Heart right ventricle (tissue), 16 donors: ENCODE measurements at regions of chr2 and their contacts with region 1.

Region 1: DNA sequence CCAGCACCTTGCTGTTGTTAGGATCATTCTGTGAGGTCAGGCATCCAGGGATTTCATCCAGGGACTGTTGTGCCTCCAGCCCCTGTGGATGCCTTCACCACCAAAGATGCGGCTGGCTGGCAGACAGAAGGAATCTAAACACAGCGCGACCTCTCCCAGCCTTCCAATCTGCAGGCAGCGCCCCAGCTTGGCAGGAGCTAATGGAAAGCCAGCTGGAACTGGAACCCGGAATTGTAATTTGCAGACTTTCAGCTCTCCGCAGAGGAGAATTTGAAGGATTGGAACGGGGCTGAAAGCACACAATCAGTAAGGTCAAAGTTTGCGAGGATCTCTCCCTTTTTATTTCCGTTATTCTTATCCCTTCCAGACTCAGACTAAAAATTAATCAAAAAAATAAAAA is 127.8 kb downstream of the TRIB2 start:
- DNase-seq: peak; percentile 61 to 66
- ATAC-seq: peak; percentile 58 to 93 (median 90)
- H3K4me3 ChIP-seq: peak overlapping the region in 2 of 10 donors; percentile 9 to 13
- H3K27ac ChIP-seq: peak overlapping the region in 9 of 10 donors; percentile 24 to 77 (median 42)
- H3K4me1 ChIP-seq: peaks cover 0 to 15% (median 4%) of the 10 kb centered on the region in 9 donors
- H3K27me3 ChIP-seq: no peaks in the 10 kb centered on the region
- CTCF ChIP-seq: no peak

Region 2: DNA sequence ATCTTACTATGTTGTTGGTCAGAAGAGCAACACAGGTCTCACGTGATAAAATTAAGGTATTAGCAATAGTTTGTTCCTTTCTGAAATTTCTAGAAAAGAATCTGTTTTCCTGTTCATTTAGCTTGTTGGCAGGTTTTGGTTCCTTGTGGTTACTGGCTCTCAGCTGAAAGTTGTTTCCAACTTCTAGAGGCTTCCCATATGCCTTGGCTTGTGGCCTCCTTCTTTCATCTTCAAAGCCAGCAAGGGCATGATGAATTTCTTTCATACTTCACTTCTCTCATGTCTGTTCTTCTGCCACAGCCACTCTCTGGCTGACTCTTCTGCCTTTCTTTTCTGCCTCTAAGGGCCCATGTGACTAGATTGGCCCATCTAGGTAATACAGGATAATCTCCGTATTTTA is 65.9 kb after region 1 on chr2:
- intact Hi-C with region 1: loop called in 3 of 10 experiments (anchors 5 to 10 kb)
- DNase-seq: no peak
- ATAC-seq: no peak
- H3K4me3 ChIP-seq: no peak overlapping the region
- H3K27ac ChIP-seq: no peak overlapping the region
- H3K4me1 ChIP-seq: no peaks in the 10 kb centered on the region
- H3K27me3 ChIP-seq: no peaks in the 10 kb centered on the region
- CTCF ChIP-seq: no peak

Region 3: GRCh38 chr2:12918835-12919445 is 74.4 kb after region 1 on chr2:
- intact Hi-C with region 1: loop called in 4 of 10 experiments (anchors 5 to 10 kb)
- DNase-seq: peak; percentile 61 to 63
- ATAC-seq: peak; percentile 80 to 98 (median 93)
- H3K4me3 ChIP-seq: peak overlapping the region in 1 of 10 donors; percentile 2
- H3K27ac ChIP-seq: peak overlapping the region; percentile 27 to 86 (median 76)
- H3K4me1 ChIP-seq: peaks cover 0 to 29% (median 21%) of the 10 kb centered on the region in 9 donors
- H3K27me3 ChIP-seq: no peaks in the 10 kb centered on the region
- CTCF ChIP-seq: no peak

Region 4: DNA sequence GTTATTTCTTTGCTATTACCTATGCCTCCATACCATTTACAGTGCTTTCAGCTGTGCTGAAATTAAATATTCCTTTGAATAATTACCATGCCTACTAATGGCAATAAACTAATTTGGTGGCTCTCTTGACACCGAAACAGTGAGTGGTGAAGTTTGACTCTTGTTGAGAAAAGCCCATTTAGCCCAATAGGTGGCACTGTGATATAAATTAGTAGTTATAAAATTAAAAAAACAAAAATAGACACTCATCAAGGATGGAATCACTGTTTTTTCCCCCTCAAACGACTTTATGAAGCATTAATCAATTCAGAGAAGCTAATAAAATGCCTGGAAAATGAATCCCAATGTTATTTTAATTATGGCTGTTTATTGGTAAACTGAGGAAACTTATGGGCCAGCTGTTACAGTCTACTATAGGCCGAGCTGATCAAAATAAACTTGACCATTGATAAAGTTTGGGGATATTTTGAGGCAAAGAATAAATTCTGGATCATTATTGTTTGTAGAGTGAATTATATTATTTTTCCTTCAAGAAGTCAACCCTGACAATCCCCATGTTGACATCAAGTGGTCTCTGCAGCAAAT is 211.8 kb after region 1 on chr2:
- intact Hi-C with region 1: no loop called
- DNase-seq: no peak
- ATAC-seq: no peak
- H3K4me3 ChIP-seq: no peak overlapping the region
- H3K27ac ChIP-seq: no peak overlapping the region
- H3K4me1 ChIP-seq: no peaks in the 10 kb centered on the region
- H3K27me3 ChIP-seq: no peaks in the 10 kb centered on the region
- CTCF ChIP-seq: peak; percentile 22 to 69 (median 58)